ENCODE measurements at regions of chr5 and their contacts with region 1.

Region 1: GRCh38 chr5:94517490-94518108 is 100.8 kb downstream of the KIAA0825 start:
- DNase-seq: no peak
- ATAC-seq: no peak
- H3K4me3 ChIP-seq: no peak overlapping the region
- H3K27ac ChIP-seq: no peak overlapping the region
- H3K4me1 ChIP-seq: no peaks in the 10 kb centered on the region
- H3K27me3 ChIP-seq: no peaks in the 10 kb centered on the region
- CTCF ChIP-seq: no peak
- EP300 ChIP-seq: no peak
- POLR2A ChIP-seq: no peak
- RAD21 ChIP-seq: no peak

Region 2: GRCh38 chr5:96198356-96199058 is 1680.9 kb after region 1 on chr5:
- CTCF ChIA-PET with region 1: no interaction called
- POLR2A ChIA-PET with region 1: no interaction called
- in situ Hi-C with region 1: loop called (anchors 10 kb)
- intact Hi-C with region 1: no loop called
- DNase-seq: no peak
- ATAC-seq: no peak
- H3K4me3 ChIP-seq: no peak overlapping the region
- H3K27ac ChIP-seq: no peak overlapping the region
- H3K4me1 ChIP-seq: no peaks in the 10 kb centered on the region
- H3K27me3 ChIP-seq: no peaks in the 10 kb centered on the region
- CTCF ChIP-seq: no peak
- EP300 ChIP-seq: no peak
- POLR2A ChIP-seq: no peak
- RAD21 ChIP-seq: no peak

Measured in K562 (cell line).